ENCODE measurements at regions of chr17 and their contacts with region 1.

Region 1: DNA sequence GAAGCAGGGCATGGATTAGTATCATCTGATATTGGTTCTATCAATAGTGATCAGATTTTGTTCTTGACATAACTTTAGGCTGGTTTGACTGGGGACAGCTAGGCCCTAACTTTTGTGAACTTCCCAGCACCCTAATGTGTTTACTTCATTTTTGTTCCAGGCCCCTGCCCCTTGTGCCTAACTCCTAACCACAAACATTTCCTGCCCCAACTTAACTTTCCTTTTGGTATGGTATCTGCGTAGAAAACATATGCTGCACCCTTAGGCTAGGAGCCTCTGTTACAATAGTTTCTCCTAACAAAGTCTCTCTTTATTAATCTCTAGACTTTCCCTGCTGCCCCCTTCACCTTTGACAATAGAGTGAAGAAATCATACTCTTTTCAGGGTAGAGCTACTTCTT is 2.5 kb downstream of the ADPRM start:
- DNase-seq: peak in 6 of 10 donors; percentile 8 to 70 (median 42)
- ATAC-seq: peak; percentile 47 to 62
- H3K4me3 Mint-ChIP-seq: peak overlapping the region; percentile 58 to 91 (median 78)
- H3K27ac Mint-ChIP-seq: peak overlapping the region; percentile 90 to 98 (median 95)
- H3K4me1 Mint-ChIP-seq: peaks cover 26 to 81% (median 70%) of the 10 kb centered on the region in 4 donors
- H3K27me3 Mint-ChIP-seq: no peaks in the 10 kb centered on the region

Region 2: GRCh38 chr17:10579270-10579669 is 120.6 kb before region 1 on chr17:
- POLR2A ChIA-PET with region 1: no interaction called
- DNase-seq: no peak
- ATAC-seq: no peak
- H3K4me3 Mint-ChIP-seq: no peak overlapping the region
- H3K27ac Mint-ChIP-seq: no peak overlapping the region
- H3K4me1 Mint-ChIP-seq: no peaks in the 10 kb centered on the region
- H3K27me3 Mint-ChIP-seq: peaks cover 5 to 23% (median 17%) of the 10 kb centered on the region in 5 donors

Region 3: DNA sequence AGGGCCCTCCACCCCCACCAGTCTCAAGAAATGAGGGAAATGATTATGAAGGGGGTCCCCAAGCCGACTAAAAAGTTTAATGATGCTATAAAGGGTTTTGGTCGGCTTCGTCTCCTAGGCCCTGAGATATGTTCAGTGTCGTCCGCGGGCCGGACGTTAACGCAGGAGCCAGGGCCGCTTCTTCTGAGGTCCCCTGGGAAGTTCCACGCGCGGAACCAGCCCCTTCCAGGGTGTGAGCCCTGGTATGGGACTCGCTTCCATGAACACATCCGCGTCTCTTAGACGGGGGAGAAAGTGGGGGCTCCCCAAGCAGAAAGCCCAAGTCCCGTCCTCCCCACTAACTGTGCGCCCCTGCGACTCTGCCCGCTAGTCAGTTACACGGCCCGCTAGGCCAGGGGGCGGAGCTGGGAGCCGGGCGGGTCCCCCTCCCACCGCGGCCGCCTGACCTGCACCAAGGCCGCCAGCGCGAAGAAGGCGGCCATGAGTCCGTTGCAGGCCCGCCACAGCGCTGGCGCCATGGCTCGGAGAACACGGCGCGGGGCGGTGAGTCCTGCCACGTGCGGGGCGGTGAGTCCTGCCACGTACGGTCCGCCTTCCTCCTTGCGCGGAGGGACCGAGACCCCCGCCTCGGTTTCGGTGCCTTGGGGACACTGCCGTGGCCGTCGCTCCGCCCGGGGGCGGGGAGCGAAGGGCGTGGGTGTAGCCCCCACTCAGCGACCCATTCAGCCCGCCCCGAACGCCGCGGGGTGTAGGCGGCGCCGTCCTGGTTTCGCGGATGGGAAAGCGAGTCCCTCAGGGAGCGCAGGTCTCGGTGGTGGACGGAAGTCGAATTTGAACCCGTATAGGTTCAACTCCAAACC is 29.7 kb after region 1 on chr17 and contains the start of gene TMEM220:
- POLR2A ChIA-PET with region 1: interaction called, 22 read pairs
- DNase-seq: peak in 9 of 10 donors; percentile 22 to 67 (median 37)
- ATAC-seq: peak; percentile 78 to 88
- H3K4me3 Mint-ChIP-seq: peak within 1 kb of the TSS; percentile 85 to 96 (median 92)
- H3K27ac Mint-ChIP-seq: peak within 1 kb of the TSS; percentile 79 to 94 (median 92)
- H3K4me1 Mint-ChIP-seq: peaks cover 7 to 37% (median 28%) of the 10 kb centered on the region in 4 donors
- H3K27me3 Mint-ChIP-seq: peaks cover 0 to 2% (median 0%) of the 10 kb centered on the region in 5 donors
- polyA plus RNA-seq, gene TMEM220: 8.8 to 19.0 (median 11.5) TPM

Region 4: DNA sequence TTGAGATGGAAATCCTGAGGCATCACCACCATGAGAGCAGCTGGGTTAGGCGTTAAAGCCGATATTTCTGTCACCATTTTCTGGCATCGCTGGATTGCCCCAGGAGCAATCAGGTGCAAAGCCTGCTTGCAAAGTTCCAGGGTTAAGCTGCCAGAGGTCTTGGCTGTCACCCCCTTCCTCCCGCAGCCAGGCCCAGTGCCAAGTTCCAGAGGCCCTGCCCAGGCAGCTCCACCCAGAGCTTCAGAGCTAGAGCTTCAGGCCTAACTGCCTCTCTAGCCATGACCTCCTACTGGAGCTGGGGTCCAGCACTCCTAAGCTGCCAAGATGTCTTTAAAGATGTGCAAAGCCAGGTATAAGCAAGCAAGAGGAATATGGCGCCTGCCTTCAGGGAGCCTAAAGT is 112.8 kb after region 1 on chr17:
- POLR2A ChIA-PET with region 1: no interaction called
- DNase-seq: no peak
- ATAC-seq: no peak
- H3K4me3 Mint-ChIP-seq: no peak overlapping the region
- H3K27ac Mint-ChIP-seq: no peak overlapping the region
- H3K4me1 Mint-ChIP-seq: peaks cover 0 to 6% (median 0%) of the 10 kb centered on the region in 4 donors
- H3K27me3 Mint-ChIP-seq: peaks cover 0 to 13% (median 11%) of the 10 kb centered on the region in 5 donors